HEK293 (cell line): ENCODE measurements at regions of chr11 and their contacts with region 1.

Region 1: DNA sequence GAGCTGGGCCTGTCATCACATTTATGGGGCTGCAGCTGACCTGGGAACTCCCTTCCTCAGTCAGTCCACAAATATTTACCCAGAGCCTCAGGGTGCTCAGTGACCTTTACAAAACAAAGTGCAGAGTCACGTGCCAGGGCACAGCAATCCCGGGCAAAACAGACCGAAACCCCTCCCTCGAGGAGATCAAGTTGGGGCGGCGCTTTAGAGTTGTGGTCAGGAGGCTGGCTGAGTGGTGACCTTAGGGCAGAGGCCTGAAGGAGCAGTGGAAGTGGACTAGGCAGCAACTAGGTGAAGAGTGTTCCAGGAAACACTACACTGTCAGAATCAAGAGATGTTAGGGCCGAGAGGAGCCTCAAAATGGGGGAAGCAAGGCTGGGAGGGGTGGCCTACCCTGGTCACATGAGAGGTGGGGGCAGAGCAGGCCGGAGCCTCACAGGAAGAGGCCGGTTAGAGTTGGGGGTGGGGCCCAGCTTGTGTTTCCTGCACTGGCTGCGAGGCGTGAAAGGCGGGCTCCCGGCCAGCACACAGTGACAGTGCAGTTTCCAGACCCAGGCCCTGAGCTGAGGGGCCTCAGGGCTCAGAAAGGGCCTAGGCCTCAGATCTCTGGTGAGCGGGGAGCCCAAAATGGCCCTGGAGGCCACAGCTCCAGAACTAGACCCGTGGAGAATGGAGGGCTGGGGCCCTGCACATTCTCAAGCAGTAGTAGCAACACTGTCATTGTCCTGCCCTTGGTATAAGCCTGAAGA is 3.7 kb upstream of the NEAT1 start:
- H3K4me3 ChIP-seq: peak overlapping the region; percentile 17
- H3K27ac ChIP-seq: peak overlapping the region; percentile 98
- H3K4me1 ChIP-seq: peaks cover 6% of the 10 kb centered on the region
- CTCF ChIP-seq: no peak

Region 2: GRCh38 chr11:65169164-65169641 is 249.7 kb before region 1 on chr11:
- CTCF ChIA-PET with region 1: no interaction called
- POLR2A ChIA-PET with region 1: no interaction called
- H3K4me3 ChIP-seq: no peak overlapping the region
- H3K27ac ChIP-seq: no peak overlapping the region
- H3K4me1 ChIP-seq: no peaks in the 10 kb centered on the region
- CTCF ChIP-seq: no peak

Region 3: GRCh38 chr11:65375012-65375411 is 43.9 kb before region 1 on chr11:
- CTCF ChIA-PET with region 1: interaction called, 11 read pairs
- POLR2A ChIA-PET with region 1: interaction called, 110 read pairs
- H3K4me3 ChIP-seq: no peak overlapping the region
- H3K27ac ChIP-seq: no peak overlapping the region
- H3K4me1 ChIP-seq: no peaks in the 10 kb centered on the region
- CTCF ChIP-seq: no peak

Region 4: GRCh38 chr11:65429724-65430405 is 11.0 kb after region 1 on chr11:
- CTCF ChIA-PET with region 1: interaction called, 15 read pairs
- POLR2A ChIA-PET with region 1: interaction called, 39 read pairs
- H3K4me3 ChIP-seq: peak overlapping the region; percentile 68
- H3K27ac ChIP-seq: peak overlapping the region; percentile 55
- H3K4me1 ChIP-seq: no peaks in the 10 kb centered on the region
- CTCF ChIP-seq: no peak

Region 5: DNA sequence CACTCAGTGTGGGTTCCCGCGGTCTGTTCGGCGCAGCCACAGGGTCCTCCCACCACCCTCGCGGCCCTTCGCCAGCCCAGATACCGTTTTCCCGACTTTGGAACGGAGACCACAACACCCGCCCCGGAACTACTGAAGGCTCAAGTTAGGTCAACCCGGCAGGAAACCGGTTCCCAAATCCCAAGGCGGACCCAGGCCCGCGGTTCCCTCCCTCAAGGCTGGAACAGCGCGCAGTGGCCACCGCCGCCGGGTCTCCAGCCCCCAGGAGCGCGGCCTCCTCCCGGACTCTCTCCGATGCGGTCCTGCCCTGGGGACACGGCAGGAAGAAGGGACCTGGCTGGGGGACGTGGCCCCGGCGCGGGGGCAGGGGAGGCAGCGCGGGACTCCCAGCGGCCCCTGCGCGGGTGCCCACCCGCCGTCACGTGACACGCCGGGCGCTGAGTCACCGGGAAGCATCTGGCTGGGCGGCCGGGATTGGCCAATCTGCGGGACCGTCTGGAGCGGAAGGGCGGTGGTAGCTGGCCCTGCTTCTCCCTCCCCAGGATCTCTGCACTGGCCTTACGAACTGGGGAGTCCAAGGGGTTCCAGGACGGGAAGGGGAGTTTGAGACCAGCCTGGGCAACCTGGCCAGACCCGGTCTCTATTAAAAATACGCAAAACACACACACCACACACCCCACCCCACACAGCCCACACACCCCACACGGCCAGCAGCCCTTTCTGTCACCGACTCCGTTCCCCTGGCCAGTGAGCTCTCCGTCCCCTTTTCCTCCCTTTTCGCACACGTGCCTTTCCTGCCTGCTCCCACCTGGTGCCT is 58.5 kb after region 1 on chr11:
- CTCF ChIA-PET with region 1: interaction called, 9 read pairs
- POLR2A ChIA-PET with region 1: interaction called, 65 read pairs
- H3K4me3 ChIP-seq: peak overlapping the region; percentile 98
- H3K27ac ChIP-seq: peak overlapping the region; percentile 93
- H3K4me1 ChIP-seq: no peaks in the 10 kb centered on the region
- CTCF ChIP-seq: 0 out of 2 replicates have a peak, but pooled peaks have one; percentile 15

Region 6: GRCh38 chr11:65547446-65548125 is 128.7 kb after region 1 on chr11:
- CTCF ChIA-PET with region 1: no interaction called
- POLR2A ChIA-PET with region 1: no interaction called
- H3K4me3 ChIP-seq: no peak overlapping the region
- H3K27ac ChIP-seq: no peak overlapping the region
- H3K4me1 ChIP-seq: no peaks in the 10 kb centered on the region; the same call in 1 of the 2 replicates
- CTCF ChIP-seq: no peak

Region 7: DNA sequence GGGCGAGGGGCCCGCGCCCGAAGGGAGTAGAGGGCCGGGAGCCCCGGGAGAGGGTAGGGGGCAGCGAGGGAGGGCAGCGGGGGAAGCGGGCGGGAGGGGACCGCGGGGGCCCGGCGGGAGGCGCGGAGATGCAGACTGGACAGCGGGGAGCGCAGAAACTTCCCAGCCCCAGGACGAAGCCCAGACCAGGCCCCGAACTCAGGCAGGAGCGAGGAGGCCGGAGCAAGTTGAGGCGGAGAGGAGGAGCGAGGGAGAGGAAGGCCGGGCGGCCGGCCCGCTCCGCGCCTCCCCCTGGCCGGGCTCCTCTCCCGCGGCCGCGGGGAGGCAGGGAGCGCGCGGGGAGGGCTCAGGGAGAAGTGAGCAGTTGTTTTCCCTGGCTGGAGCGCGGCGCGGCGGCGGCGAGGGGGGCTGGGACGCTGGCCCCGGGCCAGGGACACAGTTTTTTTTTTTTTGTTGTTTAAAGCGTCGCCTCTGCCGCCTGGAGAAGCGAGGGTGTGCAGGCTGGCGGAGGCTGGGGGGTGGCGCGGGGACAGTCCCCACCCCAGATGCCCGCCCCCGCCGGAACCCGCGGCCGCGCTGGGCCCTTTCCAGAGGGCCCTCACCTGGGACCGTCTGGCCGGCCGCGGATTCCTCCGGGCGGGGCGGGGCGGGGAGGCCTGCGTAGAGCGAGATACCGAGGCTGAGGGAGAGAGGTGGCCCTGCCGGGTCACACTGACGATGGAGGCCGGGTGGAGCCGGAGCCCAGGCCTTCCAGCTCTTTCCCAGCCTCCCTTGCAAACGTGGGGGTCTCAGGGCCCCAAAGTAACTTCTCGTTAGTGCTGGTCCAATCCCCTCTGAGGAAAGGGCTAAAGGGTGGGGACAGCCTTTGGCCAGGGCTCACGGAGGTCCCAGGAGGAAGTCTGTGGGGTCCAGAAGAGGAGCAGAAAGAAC is 139.4 kb after region 1 on chr11 and contains the start of gene LTBP3:
- CTCF ChIA-PET with region 1: interaction called, 5 read pairs
- POLR2A ChIA-PET with region 1: interaction called, 10 read pairs
- H3K4me3 ChIP-seq: peak within 1 kb of the TSS; percentile 52
- H3K27ac ChIP-seq: peak within 1 kb of the TSS; percentile 81
- H3K4me1 ChIP-seq: peaks cover 19% of the 10 kb centered on the region
- CTCF ChIP-seq: no peak

Region 8: DNA sequence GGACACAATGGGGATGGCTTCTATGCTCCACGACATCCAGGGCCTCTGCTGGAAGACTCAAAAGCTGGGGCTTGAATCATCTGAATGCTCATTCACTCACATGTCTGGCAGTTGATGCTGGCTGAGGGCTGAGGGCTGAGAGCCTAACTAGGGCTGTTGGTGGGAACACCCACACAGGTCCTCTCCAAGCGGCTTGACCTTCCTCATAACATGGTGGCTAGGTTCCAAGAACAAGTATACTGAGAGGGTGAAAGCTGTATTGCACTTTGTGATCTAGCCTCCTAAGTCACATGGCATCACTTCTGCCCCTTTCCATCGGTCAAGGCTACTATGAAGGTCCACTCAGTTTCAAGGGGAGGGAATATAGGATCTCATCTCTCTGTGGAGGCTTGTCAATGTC is 880.3 kb after region 1 on chr11:
- CTCF ChIA-PET with region 1: no interaction called
- POLR2A ChIA-PET with region 1: no interaction called
- H3K4me3 ChIP-seq: no peak overlapping the region
- H3K27ac ChIP-seq: no peak overlapping the region
- H3K4me1 ChIP-seq: no peaks in the 10 kb centered on the region
- CTCF ChIP-seq: no peak